Activated CD4-positive, alpha-beta memory T cell treated with anti-CD3 and anti-CD28 coated beads for 36 hours (primary cell): ENCODE measurements at regions of chr3 and their contacts with region 1.

Region 1: DNA sequence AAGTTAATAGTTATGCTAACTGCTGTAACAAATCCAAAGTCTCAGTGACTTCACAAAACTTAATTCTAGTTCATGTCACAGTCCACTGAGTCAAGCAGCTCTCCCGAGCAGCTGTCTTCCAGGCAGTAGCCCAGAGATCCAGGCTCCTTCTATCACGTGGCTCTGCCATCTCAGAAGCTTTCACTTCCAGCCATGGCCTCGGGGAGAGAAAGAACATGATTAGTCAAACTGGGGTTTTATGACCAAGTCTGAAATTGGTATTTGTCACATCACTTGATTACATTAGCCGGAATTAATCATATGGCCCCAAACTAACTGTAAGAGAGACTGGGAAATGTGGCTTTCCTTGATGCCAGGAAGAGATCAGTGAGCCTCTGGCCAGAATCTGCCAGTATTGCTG is 70.2 kb upstream of the DGKG start:
- DNase-seq: peak; percentile 66
- H3K4me3 Mint-ChIP-seq: no peak overlapping the region
- H3K27ac Mint-ChIP-seq: no peak overlapping the region
- H3K4me1 Mint-ChIP-seq: peaks cover 15% of the 10 kb centered on the region
- H3K27me3 Mint-ChIP-seq: peaks cover 1% of the 10 kb centered on the region

Region 2: DNA sequence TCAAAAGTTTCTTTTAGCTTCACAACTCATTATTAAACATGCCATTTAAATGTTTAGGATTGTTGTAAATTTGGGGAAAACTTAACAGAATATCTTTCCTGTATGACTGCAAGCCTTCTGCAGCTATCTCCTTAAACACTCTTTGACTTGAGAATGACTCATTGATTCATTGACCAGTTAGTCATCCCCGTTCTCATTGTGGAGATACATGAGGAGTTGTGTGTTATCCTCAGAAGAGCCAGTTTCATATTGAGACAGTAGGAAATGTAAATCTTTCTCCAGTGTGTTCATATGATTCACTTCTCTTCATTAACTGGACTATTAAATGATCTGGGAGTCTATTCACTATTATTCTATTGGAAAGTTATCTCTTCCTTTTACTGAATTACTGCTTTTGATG is 29.0 kb after region 1 on chr3:
- CTCF ChIA-PET with region 1: no interaction called
- POLR2A ChIA-PET with region 1: no interaction called
- intact Hi-C with region 1: loop called (anchors 1 kb)
- DNase-seq: no peak
- H3K4me3 Mint-ChIP-seq: no peak overlapping the region
- H3K27ac Mint-ChIP-seq: no peak overlapping the region
- H3K4me1 Mint-ChIP-seq: peaks cover 3% of the 10 kb centered on the region
- H3K27me3 Mint-ChIP-seq: peaks cover 5% of the 10 kb centered on the region

Region 3: GRCh38 chr3:186514296-186515002 is 82.3 kb after region 1 on chr3:
- CTCF ChIA-PET with region 1: interaction called, 3 read pairs
- POLR2A ChIA-PET with region 1: no interaction called
- intact Hi-C with region 1: loop called (anchors 1 kb)
- DNase-seq: peak; percentile 72
- H3K4me3 Mint-ChIP-seq: no peak overlapping the region
- H3K27ac Mint-ChIP-seq: peak overlapping the region; percentile 81
- H3K4me1 Mint-ChIP-seq: peaks cover 96% of the 10 kb centered on the region
- H3K27me3 Mint-ChIP-seq: no peaks in the 10 kb centered on the region